Activated CD4-positive, alpha-beta T cell treated with anti-CD3 and anti-CD28 coated beads, Interleukin-2, amount 10 ng/mL, durations not matched to agents 24 days and 14 days (primary cell): ENCODE measurements at regions of chr5 and their contacts with region 1.

Region 1: DNA sequence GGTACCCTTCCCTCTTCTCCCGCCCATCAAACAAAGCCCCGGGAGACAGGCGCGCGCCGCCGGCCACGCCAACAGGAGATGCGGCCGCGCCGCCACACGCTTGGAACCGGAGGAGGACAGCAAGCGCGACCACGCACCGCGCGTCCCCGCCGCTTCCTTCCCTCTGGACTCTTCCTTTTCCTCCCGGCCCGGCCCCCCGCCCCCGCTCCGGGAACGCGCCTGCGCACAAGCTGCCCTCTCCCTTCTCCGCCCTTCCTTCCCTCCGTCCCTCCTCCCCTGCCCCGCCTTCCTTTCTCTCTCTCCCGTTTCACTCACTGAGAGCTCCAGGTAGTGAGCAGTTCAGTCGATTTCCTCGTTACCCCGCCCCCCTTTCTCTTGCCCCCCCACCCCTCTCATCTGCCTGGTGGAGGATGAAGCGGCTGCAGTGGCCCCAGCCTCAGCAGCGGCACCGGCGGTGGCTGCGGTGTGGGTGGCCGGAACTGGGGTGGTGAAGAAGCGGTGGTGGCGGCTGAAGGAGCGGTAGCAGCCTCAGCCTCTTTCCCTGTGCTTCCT is at the start of gene RASA1:
- DNase-seq: peak; percentile 94
- H3K4me3 Mint-ChIP-seq: peak within 1 kb of the TSS; percentile 96
- H3K27ac Mint-ChIP-seq: peak within 1 kb of the TSS; percentile 99
- H3K4me1 Mint-ChIP-seq: peaks cover 27% of the 10 kb centered on the region
- H3K27me3 Mint-ChIP-seq: peaks cover 5% of the 10 kb centered on the region
- total RNA-seq, gene RASA1: 20.6 and 21.2 TPM in 2 replicates

Region 2: DNA sequence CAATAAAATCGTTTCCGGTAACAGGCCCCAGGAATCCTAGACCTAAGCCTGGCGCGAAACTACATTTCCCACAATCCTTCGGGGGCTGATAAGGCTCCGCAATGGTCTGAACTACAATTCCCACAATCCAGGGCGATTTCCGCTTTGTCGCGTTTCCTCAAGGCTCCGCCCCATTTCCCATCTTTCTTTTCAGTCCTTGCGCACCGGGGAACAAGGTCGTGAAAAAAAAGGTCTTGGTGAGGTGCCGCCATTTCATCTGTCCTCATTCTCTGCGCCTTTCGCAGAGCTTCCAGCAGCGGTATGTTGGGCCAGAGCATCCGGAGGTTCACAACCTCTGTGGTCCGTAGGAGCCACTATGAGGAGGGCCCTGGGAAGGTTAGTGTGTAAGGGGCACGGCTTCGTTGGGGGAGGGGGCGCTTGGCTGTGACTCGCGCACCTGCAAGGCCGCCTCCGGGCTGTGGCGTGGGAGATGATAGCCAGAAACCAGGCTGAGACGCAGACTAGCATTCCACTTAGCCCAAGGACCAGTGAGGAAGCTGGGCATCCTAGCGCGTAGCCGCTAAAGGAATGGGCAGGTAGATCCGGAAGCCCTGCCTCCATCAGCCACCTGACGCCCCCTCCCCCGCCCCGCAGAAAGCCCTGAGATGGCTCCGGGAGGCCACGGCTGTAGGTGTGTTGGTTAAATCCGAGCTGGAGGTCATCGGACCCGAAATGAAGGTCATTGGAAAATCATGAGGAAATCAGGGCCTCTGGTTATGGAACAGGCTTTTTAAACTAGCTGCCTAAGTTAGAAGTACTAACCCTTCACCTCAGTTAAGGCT is 649.7 kb before region 1 on chr5 and contains the start of gene COX7C:
- intact Hi-C with region 1: loop called (anchors 2 kb)
- DNase-seq: peak; percentile 98
- H3K4me3 Mint-ChIP-seq: peak within 1 kb of the TSS; percentile 100
- H3K27ac Mint-ChIP-seq: peak within 1 kb of the TSS; percentile 99
- H3K4me1 Mint-ChIP-seq: peaks cover 16% of the 10 kb centered on the region
- H3K27me3 Mint-ChIP-seq: peaks cover 7% of the 10 kb centered on the region
- total RNA-seq, gene COX7C: 471 and 481 TPM in 2 replicates

Region 3: GRCh38 chr5:86757824-86758223 is 509.8 kb before region 1 on chr5:
- intact Hi-C with region 1: no loop called
- DNase-seq: no peak
- H3K4me3 Mint-ChIP-seq: no peak overlapping the region
- H3K27ac Mint-ChIP-seq: no peak overlapping the region
- H3K4me1 Mint-ChIP-seq: no peaks in the 10 kb centered on the region
- H3K27me3 Mint-ChIP-seq: no peaks in the 10 kb centered on the region

Region 4: GRCh38 chr5:87081511-87082372 is 185.9 kb before region 1 on chr5:
- intact Hi-C with region 1: loop called (anchors 2 kb)
- DNase-seq: peak; percentile 82
- H3K4me3 Mint-ChIP-seq: peak overlapping the region; percentile 69
- H3K27ac Mint-ChIP-seq: peak overlapping the region; percentile 79
- H3K4me1 Mint-ChIP-seq: peaks cover 35% of the 10 kb centered on the region
- H3K27me3 Mint-ChIP-seq: no peaks in the 10 kb centered on the region

Region 5: DNA sequence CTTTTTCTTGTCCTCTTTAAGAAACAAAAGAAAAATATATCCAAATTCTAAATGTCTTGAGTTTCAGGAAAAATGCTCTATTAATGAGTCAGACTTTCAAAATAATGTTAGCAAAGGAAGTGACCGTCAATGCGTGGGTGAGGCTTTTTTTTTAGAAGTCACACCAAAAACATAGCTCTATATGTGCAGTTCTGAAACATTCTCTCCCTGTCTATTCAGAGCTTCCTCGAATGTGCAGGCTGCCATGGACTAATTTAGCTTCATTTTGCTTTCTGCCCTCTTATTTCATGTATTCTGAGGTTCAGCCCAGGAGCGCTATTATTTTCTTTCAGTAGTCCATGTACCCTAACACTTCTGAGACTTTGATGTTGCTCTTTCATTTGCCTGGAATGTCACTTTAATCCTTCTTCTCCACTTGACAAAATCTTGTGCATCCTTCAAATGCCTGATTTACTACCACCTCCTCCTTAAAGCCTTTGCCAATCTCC is 72.5 kb before region 1 on chr5:
- intact Hi-C with region 1: loop called (anchors 2 kb)
- DNase-seq: no peak
- H3K4me3 Mint-ChIP-seq: peak overlapping the region; percentile 8
- H3K27ac Mint-ChIP-seq: no peak overlapping the region
- H3K4me1 Mint-ChIP-seq: peaks cover 26% of the 10 kb centered on the region
- H3K27me3 Mint-ChIP-seq: no peaks in the 10 kb centered on the region

Region 6: GRCh38 chr5:87300744-87301143 is 33.1 kb after region 1 on chr5:
- intact Hi-C with region 1: loop called (anchors 1 kb)
- DNase-seq: no peak
- H3K4me3 Mint-ChIP-seq: no peak overlapping the region
- H3K27ac Mint-ChIP-seq: no peak overlapping the region
- H3K4me1 Mint-ChIP-seq: peaks cover 50% of the 10 kb centered on the region
- H3K27me3 Mint-ChIP-seq: no peaks in the 10 kb centered on the region

Region 7: GRCh38 chr5:87412630-87413342 is 145.1 kb after region 1 on chr5 and contains the start of gene CCNH:
- intact Hi-C with region 1: loop called (anchors 1 kb)
- DNase-seq: peak; percentile 99
- H3K4me3 Mint-ChIP-seq: peak within 1 kb of the TSS; percentile 96
- H3K27ac Mint-ChIP-seq: peak within 1 kb of the TSS; percentile 94
- H3K4me1 Mint-ChIP-seq: peaks cover 31% of the 10 kb centered on the region
- H3K27me3 Mint-ChIP-seq: peaks cover 8% of the 10 kb centered on the region
- total RNA-seq, gene CCNH: 67.2 and 75.6 TPM in 2 replicates